ENCODE measurements at regions of chr1 and their contacts with region 1.

Region 1: DNA sequence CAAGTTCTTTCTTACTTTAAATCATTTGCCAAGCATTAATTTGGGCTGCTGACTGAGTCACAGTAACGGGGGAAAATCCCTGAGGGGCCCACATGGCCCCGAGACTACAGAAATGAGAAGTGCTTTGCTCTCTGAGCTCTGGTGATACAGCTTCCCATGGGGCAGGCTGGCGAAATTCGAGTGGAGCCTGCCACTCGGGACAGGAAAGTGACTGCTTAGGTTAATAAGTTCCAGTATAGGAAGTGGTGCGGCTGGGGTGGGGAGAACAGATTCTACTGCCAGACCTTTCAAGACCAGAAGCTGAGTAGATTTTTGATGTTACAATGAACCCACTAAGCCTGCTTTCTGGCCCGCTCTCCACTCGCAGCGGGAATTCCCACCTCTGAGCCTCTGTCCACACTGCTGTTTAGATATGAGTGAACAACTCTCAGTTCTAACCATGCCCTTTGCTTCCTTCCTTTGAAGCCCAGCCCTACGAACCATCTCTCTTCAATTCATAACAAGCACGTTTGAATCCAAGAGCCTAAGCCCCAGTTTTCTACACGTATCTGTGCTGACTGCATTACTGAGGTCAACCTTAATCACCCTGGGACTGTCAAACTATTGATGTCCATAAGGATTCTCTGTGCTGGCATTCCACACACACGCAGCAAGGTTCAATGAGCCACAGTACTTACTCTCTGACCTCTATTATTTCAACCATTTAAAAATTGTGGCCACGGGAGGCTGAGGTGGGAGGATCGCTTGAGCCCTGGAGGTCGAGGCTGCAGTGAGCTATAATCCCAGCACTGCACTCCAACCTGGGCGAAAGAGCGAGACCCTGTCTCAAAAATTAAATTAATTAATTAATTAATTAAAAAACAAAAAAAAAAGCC is 9.6 kb downstream of the ZBTB17 start:
- DNase-seq: peak in 4 of 9 donors; percentile 23 to 80 (median 27)
- ATAC-seq: peak; percentile 83
- H3K4me3 ChIP-seq: peak overlapping the region; percentile 19
- H3K4me3 Mint-ChIP-seq: peak overlapping the region; percentile 64 to 81 (median 76)
- H3K27ac ChIP-seq: peak overlapping the region; percentile 29
- H3K27ac Mint-ChIP-seq: peak overlapping the region; percentile 46 to 93 (median 74)
- H3K4me1 ChIP-seq: peaks cover 13 to 19% of the 10 kb centered on the region in 2 donors
- H3K4me1 Mint-ChIP-seq: peaks cover 40 to 72% (median 66%) of the 10 kb centered on the region in 7 donors
- H3K27me3 ChIP-seq: no peaks in the 10 kb centered on the region
- H3K27me3 Mint-ChIP-seq: no peaks in the 10 kb centered on the region

Region 2: GRCh38 chr1:15370781-15371520 is 595.4 kb before region 1 on chr1:
- CTCF ChIA-PET with region 1: no interaction called
- POLR2A ChIA-PET with region 1: no interaction called
- intact Hi-C with region 1: no loop called
- DNase-seq: no peak
- ATAC-seq: no peak
- H3K4me3 ChIP-seq: no peak overlapping the region
- H3K4me3 Mint-ChIP-seq: no peak overlapping the region
- H3K27ac ChIP-seq: no peak overlapping the region
- H3K27ac Mint-ChIP-seq: no peak overlapping the region
- H3K4me1 ChIP-seq: no peaks in the 10 kb centered on the region
- H3K4me1 Mint-ChIP-seq: no peaks in the 10 kb centered on the region
- H3K27me3 ChIP-seq: no peaks in the 10 kb centered on the region
- H3K27me3 Mint-ChIP-seq: peaks cover 0 to 7% (median 0%) of the 10 kb centered on the region in 5 donors

Region 3: GRCh38 chr1:15918962-15919715 is 47.2 kb before region 1 on chr1:
- CTCF ChIA-PET with region 1: no interaction called
- POLR2A ChIA-PET with region 1: no interaction called
- intact Hi-C with region 1: loop called in 1 of 2 experiments (anchors 1 kb)
- DNase-seq: peak in 1 of 9 donors; percentile 74
- ATAC-seq: peak; percentile 68
- H3K4me3 ChIP-seq: no peak overlapping the region
- H3K4me3 Mint-ChIP-seq: peak overlapping the region in 4 of 10 donors; percentile 8 to 76 (median 20)
- H3K27ac ChIP-seq: no peak overlapping the region
- H3K27ac Mint-ChIP-seq: peak overlapping the region in 7 of 9 donors; percentile 16 to 77 (median 33)
- H3K4me1 ChIP-seq: peaks cover 10 to 22% of the 10 kb centered on the region in 2 donors
- H3K4me1 Mint-ChIP-seq: peaks cover 9 to 40% (median 31%) of the 10 kb centered on the region in 7 donors
- H3K27me3 ChIP-seq: no peaks in the 10 kb centered on the region
- H3K27me3 Mint-ChIP-seq: no peaks in the 10 kb centered on the region

Region 4: DNA sequence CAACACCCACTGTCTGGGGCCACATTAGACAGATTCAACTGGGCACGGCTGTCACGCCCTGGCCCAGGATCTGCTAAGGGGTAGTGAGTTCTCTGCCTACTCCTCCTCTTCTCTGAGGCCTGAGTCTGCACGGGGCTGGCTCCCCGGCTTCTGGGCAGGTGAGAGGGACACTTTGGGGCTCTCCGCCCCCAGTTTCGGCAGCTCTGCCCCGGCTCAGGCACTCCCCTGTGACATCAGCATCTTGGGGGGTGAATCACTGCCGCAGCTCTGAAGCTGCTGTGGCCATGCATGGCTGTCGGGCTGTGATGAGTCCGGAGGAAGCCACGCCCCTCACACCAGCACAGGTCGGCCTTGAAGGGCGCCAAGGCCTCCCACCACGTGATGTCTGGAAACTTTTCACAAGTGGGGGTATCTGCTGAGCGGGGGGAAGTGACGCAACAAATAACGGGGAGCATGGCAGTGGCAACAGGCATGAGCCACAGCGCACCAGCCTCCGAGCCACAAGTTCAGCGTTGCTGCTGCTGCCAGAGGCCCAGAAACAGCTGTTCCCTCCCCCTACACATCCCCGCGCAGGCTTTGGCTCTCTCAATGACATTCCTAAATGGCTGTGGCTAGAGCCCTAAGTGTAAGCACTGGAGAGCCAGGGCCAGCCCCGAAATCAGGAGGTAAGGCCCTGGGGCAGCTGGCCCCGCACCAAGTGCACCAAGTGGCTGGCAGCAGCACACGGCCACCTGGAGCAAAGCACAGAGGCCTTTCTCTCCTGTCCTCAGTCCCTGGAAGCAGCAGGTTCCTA is 16.7 kb before region 1 on chr1:
- CTCF ChIA-PET with region 1: no interaction called
- POLR2A ChIA-PET with region 1: no interaction called
- intact Hi-C with region 1: loop called in 1 of 2 experiments (anchors 1 kb)
- DNase-seq: peak in 5 of 9 donors; percentile 8 to 78 (median 52)
- ATAC-seq: peak; percentile 92
- H3K4me3 ChIP-seq: peak overlapping the region; percentile 47
- H3K4me3 Mint-ChIP-seq: peak overlapping the region in 7 of 10 donors; percentile 15 to 57 (median 45)
- H3K27ac ChIP-seq: peak overlapping the region; percentile 55
- H3K27ac Mint-ChIP-seq: peak overlapping the region; percentile 75 to 92 (median 86)
- H3K4me1 ChIP-seq: peaks cover 35 to 38% of the 10 kb centered on the region in 2 donors
- H3K4me1 Mint-ChIP-seq: peaks cover 35 to 65% (median 54%) of the 10 kb centered on the region in 7 donors
- H3K27me3 ChIP-seq: no peaks in the 10 kb centered on the region
- H3K27me3 Mint-ChIP-seq: no peaks in the 10 kb centered on the region

Measured in naive thymus-derived CD4-positive, alpha-beta T cell (primary cell).